CD8-positive, alpha-beta T cell (primary cell): ENCODE measurements at regions of chr17 and their contacts with region 1.

Region 1: GRCh38 chr17:39153599-39154051 is 2.2 kb upstream of the PLXDC1 start:
- DNase-seq: peak; percentile 82 to 99 (median 94)
- ATAC-seq: peak; percentile 54
- H3K4me3 ChIP-seq: peak overlapping the region; percentile 98 to 100
- H3K4me3 Mint-ChIP-seq: peak overlapping the region; percentile 100
- H3K27ac ChIP-seq: peak overlapping the region; percentile 60 to 68
- H3K27ac Mint-ChIP-seq: peak overlapping the region; percentile 98
- H3K4me1 ChIP-seq: peaks cover 42% of the 10 kb centered on the region
- H3K4me1 Mint-ChIP-seq: peaks cover 46% of the 10 kb centered on the region
- H3K27me3 ChIP-seq: no peaks in the 10 kb centered on the region
- H3K27me3 Mint-ChIP-seq: peaks cover 4% of the 10 kb centered on the region
- CTCF ChIP-seq: no peak

Region 2: GRCh38 chr17:38702166-38702899 is 451.3 kb before region 1 on chr17:
- CTCF ChIA-PET with region 1: no interaction called
- POLR2A ChIA-PET with region 1: interaction called, 3 read pairs
- intact Hi-C with region 1: loop called in 1 of 2 experiments (anchors 5 kb)
- DNase-seq: peak; percentile 58 to 91 (median 78)
- ATAC-seq: peak; percentile 27
- H3K4me3 ChIP-seq: peak overlapping the region; percentile 96 to 97
- H3K4me3 Mint-ChIP-seq: peak overlapping the region; percentile 99
- H3K27ac ChIP-seq: peak overlapping the region; percentile 70 to 94
- H3K27ac Mint-ChIP-seq: peak overlapping the region; percentile 97
- H3K4me1 ChIP-seq: peaks cover 33% of the 10 kb centered on the region
- H3K4me1 Mint-ChIP-seq: peaks cover 51% of the 10 kb centered on the region
- H3K27me3 ChIP-seq: no peaks in the 10 kb centered on the region
- H3K27me3 Mint-ChIP-seq: no peaks in the 10 kb centered on the region
- CTCF ChIP-seq: no peak

Region 3: DNA sequence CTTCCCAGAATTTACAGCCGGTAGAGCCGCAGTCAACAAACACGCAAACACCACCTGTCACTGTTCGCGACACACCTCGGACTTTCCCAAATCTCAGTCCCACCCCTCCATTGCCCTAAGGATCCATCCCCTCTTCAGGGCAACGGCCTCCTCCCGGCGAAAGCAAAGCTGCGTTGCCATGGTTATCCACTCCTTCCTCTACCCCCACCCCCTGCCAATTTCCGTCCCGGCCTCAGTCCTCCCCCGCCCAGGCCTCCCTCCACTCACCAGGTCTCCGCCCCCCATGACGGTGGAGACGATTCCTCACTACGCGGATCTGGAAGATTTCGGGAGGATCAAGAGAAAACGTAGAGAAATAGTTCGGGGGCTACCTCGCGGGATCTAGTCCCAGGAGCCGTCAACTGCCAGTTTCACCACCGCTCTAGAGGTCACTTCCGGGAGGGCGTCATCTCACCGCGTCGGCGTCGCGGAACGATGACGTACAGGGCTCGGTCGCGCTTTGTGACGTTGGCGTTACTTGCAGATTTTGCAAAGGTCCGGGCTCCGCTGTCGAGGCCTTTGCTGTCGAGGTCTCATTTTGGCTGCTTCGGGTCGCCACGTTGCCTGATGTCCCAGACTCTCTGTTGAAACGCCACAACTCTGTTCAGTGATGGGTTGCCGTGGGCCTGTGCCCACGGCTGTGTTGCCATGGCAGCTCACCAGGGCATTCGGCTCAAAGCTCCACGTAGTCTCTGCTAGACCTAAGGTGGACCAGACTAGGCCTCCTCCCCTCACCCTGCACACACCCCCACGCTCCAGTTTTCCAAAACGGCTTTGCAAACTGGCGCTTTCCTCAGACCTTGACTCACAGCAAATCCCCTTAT is 328.5 kb before region 1 on chr17 and contains the start of gene CWC25:
- CTCF ChIA-PET with region 1: no interaction called
- POLR2A ChIA-PET with region 1: no interaction called
- intact Hi-C with region 1: loop called in 1 of 2 experiments (anchors 5 kb)
- DNase-seq: peak; percentile 92 to 100 (median 97)
- ATAC-seq: peak; percentile 80
- H3K4me3 ChIP-seq: peak within 1 kb of the TSS; percentile 65 to 88
- H3K4me3 Mint-ChIP-seq: peak within 1 kb of the TSS; percentile 99
- H3K27ac ChIP-seq: peak within 1 kb of the TSS; percentile 97 to 98
- H3K27ac Mint-ChIP-seq: peak within 1 kb of the TSS; percentile 100
- H3K4me1 ChIP-seq: peaks cover 23% of the 10 kb centered on the region
- H3K4me1 Mint-ChIP-seq: peaks cover 35% of the 10 kb centered on the region
- H3K27me3 ChIP-seq: no peaks in the 10 kb centered on the region
- H3K27me3 Mint-ChIP-seq: no peaks in the 10 kb centered on the region
- CTCF ChIP-seq: no peak
- total RNA-seq, gene CWC25: 80.3 to 87.5 TPM

Region 4: GRCh38 chr17:38967290-38967738 is 186.3 kb before region 1 on chr17 and contains the start of gene FBXO47:
- CTCF ChIA-PET with region 1: interaction called, 10 read pairs
- POLR2A ChIA-PET with region 1: no interaction called
- intact Hi-C with region 1: loop called in 1 of 2 experiments (anchors 5 kb)
- DNase-seq: peak; percentile 61 to 93 (median 82)
- ATAC-seq: peak; percentile 98
- H3K4me3 ChIP-seq: peak within 1 kb of the TSS; percentile 18 to 53
- H3K4me3 Mint-ChIP-seq: peak within 1 kb of the TSS; percentile 81
- H3K27ac ChIP-seq: peak within 1 kb of the TSS; percentile 42 to 65
- H3K27ac Mint-ChIP-seq: peak within 1 kb of the TSS; percentile 89
- H3K4me1 ChIP-seq: peaks cover 9% of the 10 kb centered on the region
- H3K4me1 Mint-ChIP-seq: peaks cover 19% of the 10 kb centered on the region
- H3K27me3 ChIP-seq: no peaks in the 10 kb centered on the region
- H3K27me3 Mint-ChIP-seq: no peaks in the 10 kb centered on the region
- CTCF ChIP-seq: no peak
- total RNA-seq, gene FBXO47: not detected

Region 5: GRCh38 chr17:39069114-39069756 is 84.4 kb before region 1 on chr17:
- CTCF ChIA-PET with region 1: interaction called, 53 read pairs
- POLR2A ChIA-PET with region 1: interaction called, 6 read pairs
- intact Hi-C with region 1: loop called (anchors 1 kb)
- DNase-seq: peak in 7 of 9 experiments; percentile 2 to 76 (median 32)
- ATAC-seq: peak; percentile 96
- H3K4me3 ChIP-seq: no peak overlapping the region
- H3K4me3 Mint-ChIP-seq: no peak overlapping the region
- H3K27ac ChIP-seq: no peak overlapping the region
- H3K27ac Mint-ChIP-seq: peak overlapping the region; percentile 57
- H3K4me1 ChIP-seq: no peaks in the 10 kb centered on the region
- H3K4me1 Mint-ChIP-seq: peaks cover 5% of the 10 kb centered on the region
- H3K27me3 ChIP-seq: no peaks in the 10 kb centered on the region
- H3K27me3 Mint-ChIP-seq: no peaks in the 10 kb centered on the region
- CTCF ChIP-seq: peak; percentile 65

Region 6: GRCh38 chr17:39099663-39100286 is 53.9 kb before region 1 on chr17:
- CTCF ChIA-PET with region 1: interaction called, 94 read pairs
- POLR2A ChIA-PET with region 1: interaction called, 72 read pairs
- intact Hi-C with region 1: loop called in 1 of 2 experiments (anchors 1 kb)
- DNase-seq: no peak
- ATAC-seq: no peak
- H3K4me3 ChIP-seq: no peak overlapping the region
- H3K4me3 Mint-ChIP-seq: no peak overlapping the region
- H3K27ac ChIP-seq: no peak overlapping the region
- H3K27ac Mint-ChIP-seq: no peak overlapping the region
- H3K4me1 ChIP-seq: peaks cover 65% of the 10 kb centered on the region
- H3K4me1 Mint-ChIP-seq: peaks cover 71% of the 10 kb centered on the region
- H3K27me3 ChIP-seq: no peaks in the 10 kb centered on the region
- H3K27me3 Mint-ChIP-seq: no peaks in the 10 kb centered on the region
- CTCF ChIP-seq: no peak

Region 7: DNA sequence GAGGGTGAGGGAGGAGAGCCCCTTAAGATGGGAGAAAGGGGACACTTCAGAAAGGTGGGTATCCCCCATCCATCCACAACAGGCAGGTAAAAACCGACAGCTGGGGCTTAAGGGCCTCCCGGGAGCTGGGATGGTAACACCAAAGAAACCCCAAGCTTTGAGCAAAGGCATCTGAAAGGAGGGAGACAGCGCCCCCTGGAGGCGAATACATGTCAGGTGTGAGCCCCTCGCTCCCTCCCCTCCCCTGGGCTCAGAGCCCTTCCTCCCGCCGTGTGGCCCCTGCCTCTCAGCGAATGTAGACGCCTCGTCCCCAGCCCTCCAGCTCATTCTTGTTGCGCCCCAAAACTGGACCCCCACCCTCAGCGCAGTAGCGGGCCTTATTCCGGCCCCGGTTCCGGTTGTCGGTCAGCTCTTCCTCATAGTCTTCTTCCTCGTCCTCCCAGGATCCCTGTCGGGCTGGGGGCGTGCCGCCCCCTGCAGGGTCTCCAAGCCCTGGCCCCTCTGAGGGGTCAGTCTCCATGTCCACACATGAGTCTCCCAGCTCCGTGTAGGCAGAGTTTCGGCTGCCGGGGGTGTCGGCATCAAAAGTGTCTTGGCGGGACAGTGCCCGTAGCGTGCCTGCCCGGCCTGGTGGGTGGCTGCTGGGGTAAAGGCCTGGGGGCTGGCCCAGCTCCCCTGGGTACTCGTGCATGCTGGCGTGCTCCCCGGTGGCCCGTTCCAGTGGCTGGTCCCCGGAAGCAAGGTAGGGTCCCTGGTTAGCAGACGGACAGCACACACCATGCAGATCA is 21.5 kb after region 1 on chr17:
- CTCF ChIA-PET with region 1: interaction called, 29 read pairs
- POLR2A ChIA-PET with region 1: interaction called, 5 read pairs
- intact Hi-C with region 1: loop called in 1 of 2 experiments (anchors 1 kb)
- DNase-seq: peak; percentile 56 to 89 (median 83)
- ATAC-seq: peak; percentile 93
- H3K4me3 ChIP-seq: no peak overlapping the region
- H3K4me3 Mint-ChIP-seq: no peak overlapping the region
- H3K27ac ChIP-seq: no peak overlapping the region
- H3K27ac Mint-ChIP-seq: no peak overlapping the region
- H3K4me1 ChIP-seq: peaks cover 15% of the 10 kb centered on the region
- H3K4me1 Mint-ChIP-seq: peaks cover 23% of the 10 kb centered on the region
- H3K27me3 ChIP-seq: no peaks in the 10 kb centered on the region
- H3K27me3 Mint-ChIP-seq: no peaks in the 10 kb centered on the region
- CTCF ChIP-seq: peak; percentile 85

Region 8: DNA sequence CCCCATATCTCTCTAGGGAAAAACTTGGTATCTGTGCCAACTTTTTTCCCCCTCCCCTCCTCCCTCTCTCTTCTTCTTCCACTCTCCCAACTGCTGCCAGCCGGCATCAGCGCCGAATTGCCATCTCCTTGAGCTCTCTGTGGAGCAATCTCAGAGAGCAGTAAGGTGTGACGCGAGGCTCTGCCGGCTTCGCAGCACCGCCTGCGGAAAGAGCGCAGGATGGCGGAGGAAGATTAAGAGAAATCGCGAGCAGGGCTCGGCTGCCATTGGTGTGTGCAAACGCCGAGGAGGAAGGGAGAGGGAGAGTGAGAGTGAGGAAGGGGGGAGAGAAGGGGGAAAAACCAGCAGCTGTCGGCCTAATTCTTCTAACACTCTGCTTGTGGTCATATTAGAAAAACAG is 409.9 kb after region 1 on chr17:
- CTCF ChIA-PET with region 1: no interaction called
- POLR2A ChIA-PET with region 1: no interaction called
- intact Hi-C with region 1: no loop called
- DNase-seq: no peak
- ATAC-seq: no peak
- H3K4me3 ChIP-seq: no peak overlapping the region
- H3K4me3 Mint-ChIP-seq: no peak overlapping the region
- H3K27ac ChIP-seq: no peak overlapping the region
- H3K27ac Mint-ChIP-seq: no peak overlapping the region
- H3K4me1 ChIP-seq: no peaks in the 10 kb centered on the region
- H3K4me1 Mint-ChIP-seq: no peaks in the 10 kb centered on the region
- H3K27me3 ChIP-seq: no peaks in the 10 kb centered on the region
- H3K27me3 Mint-ChIP-seq: no peaks in the 10 kb centered on the region
- CTCF ChIP-seq: no peak